GM13977 (cell line): ENCODE measurements at regions of chr9 and their contacts with region 1.

Region 1: DNA sequence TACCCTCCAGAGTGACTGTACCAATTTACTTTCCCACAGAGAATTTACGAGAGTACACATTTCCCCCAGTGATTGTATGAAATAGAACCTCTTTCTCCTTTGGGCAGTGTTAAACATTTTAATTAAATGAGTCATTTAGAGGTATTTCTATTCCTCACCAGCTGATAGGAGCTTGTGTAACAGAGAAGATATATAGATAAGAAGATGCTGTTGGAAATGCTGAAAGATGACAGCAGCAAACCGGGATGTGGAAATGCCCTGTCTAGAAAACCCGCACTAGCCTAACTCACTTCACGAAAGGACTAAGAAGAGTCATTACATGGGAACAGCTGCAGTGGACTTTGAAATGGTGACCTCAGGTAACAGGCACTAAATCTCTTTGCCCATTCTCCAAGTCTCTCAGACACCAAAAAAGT is 68.3 kb downstream of the LPAR1 start:
- DNase-seq: no peak
- CTCF ChIP-seq: no peak

Region 2: DNA sequence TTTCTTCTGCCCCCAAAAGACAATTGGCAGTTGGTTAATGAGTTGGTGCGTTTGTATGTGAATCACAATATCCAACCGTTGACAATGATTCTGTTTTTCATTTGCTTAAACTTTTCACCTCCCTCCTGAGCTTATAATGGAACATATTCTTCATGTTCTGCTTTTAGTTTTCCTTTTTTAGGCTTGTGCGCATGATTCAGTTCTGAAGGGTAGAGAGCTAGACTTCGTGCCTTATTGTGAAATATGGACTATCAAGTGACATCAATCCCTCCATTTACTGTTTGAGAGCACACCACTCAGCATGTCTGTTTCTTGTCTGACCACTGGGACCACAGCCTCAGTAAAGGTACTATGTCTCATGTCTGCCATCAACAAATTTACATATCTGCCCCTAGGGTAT is 98.8 kb after region 1 on chr9:
- in situ Hi-C with region 1: loop called (anchors 25 kb)
- DNase-seq: no peak
- CTCF ChIP-seq: no peak